Activated T-helper 2 cell treated with anti-CD3 and anti-CD28 coated beads, Interferon-gamma antibody, Interleukin-2, Interleukin-4, amounts not matched to agents 10 μg/mL and 5 μg/mL and 100 μg/mL, durations not matched to agents 14 hours and 24 hours and 36 hours (primary cell): ENCODE measurements at regions of chrX and their contacts with region 1.

Region 1: GRCh38 chrX:70454441-70455365 is 10.1 kb downstream of the DLG3 start:
- DNase-seq: peak; percentile 61
- H3K4me3 Mint-ChIP-seq: peak overlapping the region; percentile 89
- H3K27ac Mint-ChIP-seq: peak overlapping the region; percentile 93
- H3K4me1 Mint-ChIP-seq: peaks cover 29% of the 10 kb centered on the region
- H3K27me3 Mint-ChIP-seq: no peaks in the 10 kb centered on the region

Region 2: DNA sequence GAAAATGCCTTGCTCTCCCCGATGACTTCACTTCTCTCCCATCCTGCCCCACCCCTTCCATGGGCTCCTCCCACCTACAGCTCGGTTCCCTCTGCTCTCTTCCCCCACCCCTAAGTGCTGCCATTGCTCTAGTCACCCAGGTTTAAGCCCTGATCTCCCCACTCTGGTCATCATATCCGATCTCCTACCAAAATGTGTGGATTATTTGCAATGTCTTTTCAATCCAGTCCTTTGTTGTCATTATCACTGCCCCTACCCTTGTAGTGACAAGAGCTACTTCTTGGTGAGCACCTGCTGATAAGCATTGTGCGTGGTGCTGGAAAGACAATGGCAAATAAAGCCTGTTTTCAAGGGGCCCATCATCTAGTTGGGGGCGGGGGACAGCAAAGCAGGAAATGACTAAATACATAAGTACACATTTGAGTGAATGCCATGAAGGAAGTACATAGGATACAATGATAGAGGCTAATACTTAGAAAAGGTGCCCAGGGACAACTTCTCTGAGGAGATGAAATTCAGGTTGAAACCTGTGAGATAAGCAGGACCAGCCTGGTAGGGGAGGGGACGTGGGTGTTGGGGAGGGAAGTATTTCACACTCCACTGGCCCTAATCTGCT is 53.7 kb after region 1 on chrX:
- intact Hi-C with region 1: loop called (anchors 2 kb)
- DNase-seq: peak; percentile 9
- H3K4me3 Mint-ChIP-seq: peak overlapping the region; percentile 14
- H3K27ac Mint-ChIP-seq: peak overlapping the region; percentile 84
- H3K4me1 Mint-ChIP-seq: peaks cover 35% of the 10 kb centered on the region
- H3K27me3 Mint-ChIP-seq: no peaks in the 10 kb centered on the region

Region 3: DNA sequence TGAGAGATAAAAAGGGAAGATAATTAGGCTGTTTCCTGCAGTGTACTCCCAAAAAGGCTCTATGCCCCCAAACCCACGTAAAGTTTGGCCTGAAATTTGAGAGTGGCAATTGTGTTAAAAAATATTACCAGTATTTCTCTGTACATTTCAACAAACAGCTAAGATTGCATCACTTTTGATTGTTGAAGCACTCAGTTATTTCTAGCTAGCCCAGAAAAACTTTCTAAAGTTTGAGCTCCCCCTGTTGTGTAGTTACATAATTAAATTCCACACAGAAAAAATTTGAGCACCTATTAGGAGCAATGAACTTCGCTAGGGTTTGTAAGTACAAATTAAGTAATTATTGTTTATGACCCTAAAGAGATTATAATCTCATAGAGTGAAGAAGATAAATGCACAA is 99.4 kb after region 1 on chrX:
- intact Hi-C with region 1: loop called (anchors 2 kb)
- DNase-seq: no peak
- H3K4me3 Mint-ChIP-seq: no peak overlapping the region
- H3K27ac Mint-ChIP-seq: no peak overlapping the region
- H3K4me1 Mint-ChIP-seq: peaks cover 13% of the 10 kb centered on the region
- H3K27me3 Mint-ChIP-seq: peaks cover 2% of the 10 kb centered on the region

Region 4: DNA sequence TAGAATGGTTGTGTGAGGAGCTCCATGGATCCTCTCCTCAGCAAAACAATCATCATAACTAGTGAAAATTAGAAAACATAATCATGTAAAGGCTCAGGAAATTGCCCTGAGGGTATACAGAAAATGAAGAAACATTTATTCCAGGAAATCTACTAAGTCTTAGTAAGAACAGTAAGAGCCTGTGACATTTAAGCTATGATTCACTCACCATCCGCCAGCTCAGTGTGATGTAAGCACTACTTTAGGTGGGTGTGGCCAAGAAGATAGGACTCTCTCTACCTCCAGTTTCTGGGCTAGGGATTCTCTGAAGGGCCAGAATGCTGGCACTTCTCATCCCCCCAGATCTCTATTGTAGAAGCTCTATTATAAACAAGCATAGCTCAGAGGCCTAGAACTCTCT is 137.4 kb after region 1 on chrX:
- intact Hi-C with region 1: loop called (anchors 2 kb)
- DNase-seq: peak; percentile 8
- H3K4me3 Mint-ChIP-seq: no peak overlapping the region
- H3K27ac Mint-ChIP-seq: peak overlapping the region; percentile 72
- H3K4me1 Mint-ChIP-seq: peaks cover 18% of the 10 kb centered on the region
- H3K27me3 Mint-ChIP-seq: no peaks in the 10 kb centered on the region

Region 5: DNA sequence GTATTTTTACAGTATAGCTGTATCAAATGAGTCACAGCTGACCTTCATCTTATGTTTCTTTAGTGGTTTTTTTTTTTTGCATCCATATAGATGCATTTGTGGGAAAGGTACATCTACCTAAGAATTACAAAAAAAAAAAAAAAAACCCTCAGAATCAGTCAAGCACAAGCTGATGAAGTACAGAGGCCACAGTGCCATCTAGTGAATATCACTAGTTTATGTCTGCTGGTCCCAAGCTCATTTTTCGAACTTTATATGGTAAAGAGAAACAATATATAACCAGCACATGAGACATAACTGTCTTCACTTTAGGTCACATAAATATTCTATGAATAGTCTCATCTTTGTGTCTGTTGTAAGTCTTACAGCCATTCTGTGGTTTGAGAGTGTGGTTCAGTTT is 210.0 kb after region 1 on chrX:
- intact Hi-C with region 1: loop called (anchors 1 kb)
- DNase-seq: no peak
- H3K4me3 Mint-ChIP-seq: no peak overlapping the region
- H3K27ac Mint-ChIP-seq: no peak overlapping the region
- H3K4me1 Mint-ChIP-seq: peaks cover 2% of the 10 kb centered on the region
- H3K27me3 Mint-ChIP-seq: peaks cover 4% of the 10 kb centered on the region

Region 6: GRCh38 chrX:70672326-70672725 is 217.6 kb after region 1 on chrX:
- intact Hi-C with region 1: loop called (anchors 1 kb)
- DNase-seq: no peak
- H3K4me3 Mint-ChIP-seq: no peak overlapping the region
- H3K27ac Mint-ChIP-seq: peak overlapping the region; percentile 86
- H3K4me1 Mint-ChIP-seq: peaks cover 23% of the 10 kb centered on the region
- H3K27me3 Mint-ChIP-seq: no peaks in the 10 kb centered on the region

Region 7: DNA sequence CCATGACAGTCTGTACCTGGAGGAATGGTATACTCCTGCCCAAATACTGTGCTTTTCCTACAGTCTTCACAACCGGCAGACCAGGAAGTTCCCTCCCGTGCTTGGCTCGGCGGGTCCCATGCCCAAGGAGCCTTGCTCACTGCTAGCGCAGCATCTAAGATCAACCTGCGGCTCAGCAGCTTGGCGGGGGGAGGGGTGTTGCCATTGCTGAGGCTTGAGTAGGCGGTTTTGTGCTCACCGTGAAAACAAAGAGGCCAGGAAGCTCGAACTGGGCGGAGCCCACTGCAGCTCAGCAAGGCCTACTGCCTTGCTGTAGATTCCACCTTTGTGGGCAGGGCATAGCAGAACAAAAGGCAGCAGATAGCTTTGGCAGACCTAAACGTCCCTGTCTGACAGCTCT is 301.1 kb after region 1 on chrX:
- intact Hi-C with region 1: loop called (anchors 10 kb)
- DNase-seq: peak; percentile 38
- H3K4me3 Mint-ChIP-seq: no peak overlapping the region
- H3K27ac Mint-ChIP-seq: peak overlapping the region; percentile 38
- H3K4me1 Mint-ChIP-seq: peaks cover 16% of the 10 kb centered on the region
- H3K27me3 Mint-ChIP-seq: no peaks in the 10 kb centered on the region